ENCODE measurements at regions of chr3 and their contacts with region 1.

Region 1: GRCh38 chr3:25664810-25665314 is at the start of gene TOP2B:
- DNase-seq: peak; percentile 97
- H3K4me3 ChIP-seq: peak within 1 kb of the TSS; percentile 72
- H3K27ac ChIP-seq: peak within 1 kb of the TSS; percentile 95
- H3K4me1 ChIP-seq: no peaks in the 10 kb centered on the region
- H3K27me3 ChIP-seq: no peaks in the 10 kb centered on the region
- CTCF ChIP-seq: no peak
- total RNA-seq, gene TOP2B: 105 TPM

Region 2: DNA sequence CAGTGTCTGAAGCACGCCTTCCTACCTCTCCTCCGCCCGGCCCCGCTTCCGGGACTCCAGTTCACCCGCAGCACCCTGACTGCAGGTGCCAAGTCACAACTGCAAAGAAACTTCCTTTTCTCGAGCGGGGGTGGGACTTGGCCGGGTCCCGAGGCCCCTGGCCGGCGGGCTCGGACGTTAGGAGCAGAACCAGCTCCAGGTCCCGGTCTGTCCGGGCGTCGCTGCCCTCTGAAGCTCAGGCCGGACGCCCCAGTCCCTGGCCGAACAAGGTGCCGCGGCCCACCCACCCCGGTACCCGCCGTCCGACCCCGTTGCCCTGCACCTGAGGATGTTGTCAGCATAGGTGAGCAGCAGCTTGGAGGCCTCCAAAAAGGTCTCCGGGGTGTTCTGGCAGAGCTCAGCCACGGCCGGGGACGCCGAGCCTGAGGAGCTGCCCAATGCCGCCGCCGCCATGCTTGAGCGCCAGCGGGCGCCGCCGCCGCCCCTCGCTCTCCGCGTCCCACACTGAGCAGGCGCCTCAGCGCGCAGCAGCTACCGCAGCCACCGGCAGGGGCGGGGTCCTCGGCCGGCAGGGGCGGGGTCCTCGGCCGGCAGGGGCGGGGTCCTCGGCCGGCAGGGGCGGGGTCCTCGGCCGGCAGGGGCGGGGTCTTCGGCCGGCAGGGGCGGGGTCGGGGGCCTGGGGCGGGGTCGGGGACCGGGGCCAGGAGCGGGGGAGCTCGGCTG is 118.2 kb after region 1 on chr3 and contains the start of gene NGLY1:
- intact Hi-C with region 1: loop called (anchors 5 kb)
- DNase-seq: peak; percentile 88
- H3K4me3 ChIP-seq: peak within 1 kb of the TSS; percentile 81
- H3K27ac ChIP-seq: peak within 1 kb of the TSS; percentile 84
- H3K4me1 ChIP-seq: peaks cover 5% of the 10 kb centered on the region
- H3K27me3 ChIP-seq: no peaks in the 10 kb centered on the region
- CTCF ChIP-seq: no peak
- total RNA-seq, gene NGLY1: 50.3 to 50.5 TPM

Region 3: GRCh38 chr3:26091096-26091495 is 426.2 kb after region 1 on chr3:
- intact Hi-C with region 1: no loop called
- DNase-seq: no peak
- H3K4me3 ChIP-seq: no peak overlapping the region
- H3K27ac ChIP-seq: no peak overlapping the region
- H3K4me1 ChIP-seq: no peaks in the 10 kb centered on the region
- H3K27me3 ChIP-seq: no peaks in the 10 kb centered on the region
- CTCF ChIP-seq: no peak

Measured in colonic mucosa (tissue), 4 donors.